ENCODE measurements at regions of chr1 and their contacts with region 1.

Region 1: GRCh38 chr1:44721485-44722361 is 9.2 kb downstream of the RNU5D-1 start:
- DNase-seq: peak; percentile 77 to 85 (median 79)
- H3K4me3 ChIP-seq: no peak overlapping the region
- H3K4me3 Mint-ChIP-seq: peak overlapping the region; percentile 57 to 87 (median 80)
- H3K27ac ChIP-seq: peak overlapping the region; percentile 51
- H3K27ac Mint-ChIP-seq: peak overlapping the region; percentile 89 to 97 (median 94)
- H3K4me1 ChIP-seq: peaks cover 58% of the 10 kb centered on the region
- H3K4me1 Mint-ChIP-seq: peaks cover 50 to 74% (median 62%) of the 10 kb centered on the region in 4 donors
- H3K27me3 ChIP-seq: no peaks in the 10 kb centered on the region
- H3K27me3 Mint-ChIP-seq: no peaks in the 10 kb centered on the region

Region 2: GRCh38 chr1:44696789-44697345 is 24.9 kb before region 1 on chr1:
- CTCF ChIA-PET with region 1: interaction called, 6 read pairs
- POLR2A ChIA-PET with region 1: interaction called, 15 read pairs
- intact Hi-C with region 1: no loop called
- DNase-seq: peak in 2 of 5 donors; percentile 29 to 43
- H3K4me3 ChIP-seq: no peak overlapping the region
- H3K4me3 Mint-ChIP-seq: peak overlapping the region in 4 of 8 donors; percentile 29 to 83 (median 52)
- H3K27ac ChIP-seq: no peak overlapping the region
- H3K27ac Mint-ChIP-seq: peak overlapping the region; percentile 27 to 88 (median 84)
- H3K4me1 ChIP-seq: peaks cover 12% of the 10 kb centered on the region
- H3K4me1 Mint-ChIP-seq: peaks cover 4 to 19% (median 11%) of the 10 kb centered on the region in 4 donors
- H3K27me3 ChIP-seq: no peaks in the 10 kb centered on the region
- H3K27me3 Mint-ChIP-seq: no peaks in the 10 kb centered on the region

Region 3: GRCh38 chr1:44775078-44775929 is 53.6 kb after region 1 on chr1 and contains the start of gene RPS8:
- CTCF ChIA-PET with region 1: interaction called, 4 read pairs
- POLR2A ChIA-PET with region 1: interaction called, 122 read pairs
- intact Hi-C with region 1: no loop called
- DNase-seq: peak; percentile 89 to 92 (median 91)
- H3K4me3 ChIP-seq: peak within 1 kb of the TSS; percentile 87 to 88
- H3K4me3 Mint-ChIP-seq: peak within 1 kb of the TSS; percentile 89 to 98 (median 94)
- H3K27ac ChIP-seq: peak within 1 kb of the TSS; percentile 78
- H3K27ac Mint-ChIP-seq: peak within 1 kb of the TSS; percentile 82 to 99 (median 98)
- H3K4me1 ChIP-seq: peaks cover 25% of the 10 kb centered on the region
- H3K4me1 Mint-ChIP-seq: peaks cover 20 to 56% (median 27%) of the 10 kb centered on the region in 4 donors
- H3K27me3 ChIP-seq: no peaks in the 10 kb centered on the region
- H3K27me3 Mint-ChIP-seq: no peaks in the 10 kb centered on the region
- total RNA-seq, gene RPS8: 2,728 to 2,811 TPM

Region 4: DNA sequence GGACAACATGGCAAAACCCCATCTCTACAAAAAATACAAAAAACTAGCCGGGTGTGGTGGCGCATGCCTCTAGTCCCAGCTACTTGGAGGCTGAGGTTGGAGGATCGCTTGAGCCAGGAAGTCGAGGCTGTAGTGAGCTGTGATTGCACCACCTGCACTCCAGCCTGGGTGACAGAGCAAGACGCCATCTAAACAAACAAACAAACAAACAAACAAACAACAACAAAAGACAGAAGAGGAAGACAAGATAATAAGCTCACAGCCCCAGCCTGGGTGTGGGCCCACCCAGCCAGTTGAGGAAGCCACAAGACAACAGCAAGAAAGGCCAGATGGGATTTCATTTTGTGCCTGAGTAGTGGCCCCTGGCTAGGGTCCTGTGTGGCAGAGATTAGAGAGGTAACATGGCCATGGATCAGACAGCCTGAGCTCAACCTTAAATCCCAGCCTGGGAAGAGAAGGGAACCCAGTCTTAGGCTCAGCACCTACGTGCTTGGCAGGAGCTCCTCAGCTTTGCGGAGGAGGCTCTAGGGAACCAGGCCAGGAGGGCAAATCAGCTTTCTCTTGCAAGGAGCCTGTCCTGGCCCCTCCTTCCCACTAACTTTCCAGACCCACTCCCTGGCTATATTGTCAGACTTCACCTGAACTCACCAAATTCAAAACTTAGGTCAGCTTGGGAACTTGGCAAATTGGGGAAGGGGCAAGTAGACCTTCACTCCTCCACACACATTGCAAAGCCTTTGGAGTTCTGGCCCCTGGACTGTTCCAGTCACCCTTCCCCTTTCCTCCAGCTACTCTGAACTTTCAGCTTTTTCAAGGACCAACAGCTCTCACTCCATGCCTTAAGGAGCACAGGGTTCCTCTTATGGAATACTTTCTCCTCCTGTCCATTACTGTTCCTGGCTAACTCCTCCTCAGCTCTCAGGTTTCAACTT is 71.3 kb after region 1 on chr1:
- CTCF ChIA-PET with region 1: interaction called, 75 read pairs
- POLR2A ChIA-PET with region 1: interaction called, 10 read pairs
- intact Hi-C with region 1: no loop called
- DNase-seq: no peak
- H3K4me3 ChIP-seq: no peak overlapping the region
- H3K4me3 Mint-ChIP-seq: no peak overlapping the region
- H3K27ac ChIP-seq: no peak overlapping the region
- H3K27ac Mint-ChIP-seq: peak overlapping the region in 3 of 7 donors; percentile 44 to 91 (median 79)
- H3K4me1 ChIP-seq: no peaks in the 10 kb centered on the region
- H3K4me1 Mint-ChIP-seq: peaks cover 0 to 5% (median 2%) of the 10 kb centered on the region in 4 donors
- H3K27me3 ChIP-seq: no peaks in the 10 kb centered on the region
- H3K27me3 Mint-ChIP-seq: no peaks in the 10 kb centered on the region

Region 5: DNA sequence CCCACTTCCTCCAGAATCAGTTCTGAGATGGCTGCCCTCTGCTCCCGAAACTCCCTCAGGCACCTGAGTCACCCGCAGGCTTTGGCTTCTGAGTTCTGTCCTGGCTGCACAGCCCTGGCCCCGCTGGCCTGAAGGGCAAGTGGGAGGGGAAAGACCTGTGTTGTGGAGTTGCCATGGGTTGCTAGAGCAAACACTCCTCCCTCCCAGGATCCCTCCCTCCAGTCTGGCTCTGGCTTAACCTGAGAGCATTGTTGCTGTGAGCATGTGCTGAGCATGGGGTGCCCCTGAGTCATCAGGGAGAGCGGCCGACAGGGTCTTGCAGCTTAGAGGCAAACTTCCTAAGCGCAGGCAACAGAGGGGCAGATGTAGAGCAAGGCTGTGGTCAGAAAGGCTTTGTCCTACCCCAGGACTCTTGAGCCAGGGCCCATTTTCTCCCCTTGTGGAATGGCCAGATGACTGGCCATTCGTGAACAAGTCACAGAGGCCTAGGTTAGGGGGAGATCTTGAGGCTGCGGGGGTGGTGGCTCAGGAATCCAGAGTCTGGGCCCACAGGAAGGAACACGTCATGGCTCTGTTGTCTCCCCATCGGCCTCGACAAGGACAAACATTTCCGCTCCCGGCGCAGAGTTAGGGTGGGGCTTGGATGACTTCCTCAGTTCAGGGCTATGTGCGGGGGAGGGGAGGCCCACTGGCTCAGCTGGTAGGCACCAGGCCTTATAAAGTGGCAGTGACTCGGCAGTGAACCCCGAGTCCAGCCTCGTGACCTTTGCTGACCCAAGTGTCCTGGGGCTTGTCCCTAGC is 85.7 kb after region 1 on chr1 and contains the start of gene DYNLT4:
- CTCF ChIA-PET with region 1: interaction called, 5 read pairs
- POLR2A ChIA-PET with region 1: interaction called, 98 read pairs
- intact Hi-C with region 1: no loop called
- DNase-seq: peak; percentile 91 to 98 (median 91)
- H3K4me3 ChIP-seq: peak within 1 kb of the TSS; percentile 41 to 57
- H3K4me3 Mint-ChIP-seq: peak within 1 kb of the TSS; percentile 74 to 87 (median 80)
- H3K27ac ChIP-seq: peak within 1 kb of the TSS; percentile 98
- H3K27ac Mint-ChIP-seq: peak within 1 kb of the TSS; percentile 98 to 100 (median 99)
- H3K4me1 ChIP-seq: peaks cover 91% of the 10 kb centered on the region
- H3K4me1 Mint-ChIP-seq: peaks cover 57 to 94% (median 73%) of the 10 kb centered on the region in 4 donors
- H3K27me3 ChIP-seq: no peaks in the 10 kb centered on the region
- H3K27me3 Mint-ChIP-seq: no peaks in the 10 kb centered on the region
- total RNA-seq, gene DYNLT4: 0.47 TPM in 1 of 2 experiments, not detected in the other

Region 6: GRCh38 chr1:45521398-45522323 is 799.9 kb after region 1 on chr1 and contains the start of gene PRDX1:
- CTCF ChIA-PET with region 1: no interaction called
- POLR2A ChIA-PET with region 1: interaction called, 11 read pairs
- intact Hi-C with region 1: no loop called
- DNase-seq: peak; percentile 95
- H3K4me3 ChIP-seq: peak within 1 kb of the TSS; percentile 90 to 94
- H3K4me3 Mint-ChIP-seq: peak within 1 kb of the TSS; percentile 93 to 97 (median 96)
- H3K27ac ChIP-seq: peak within 1 kb of the TSS; percentile 87
- H3K27ac Mint-ChIP-seq: peak within 1 kb of the TSS; percentile 85 to 97 (median 93)
- H3K4me1 ChIP-seq: peaks cover 25% of the 10 kb centered on the region
- H3K4me1 Mint-ChIP-seq: peaks cover 17 to 41% (median 29%) of the 10 kb centered on the region in 4 donors
- H3K27me3 ChIP-seq: no peaks in the 10 kb centered on the region
- H3K27me3 Mint-ChIP-seq: no peaks in the 10 kb centered on the region
- total RNA-seq, gene PRDX1: 130 to 145 TPM